HepG2 (cell line): ENCODE measurements at regions of chr14 and their contacts with region 1.

Region 1: GRCh38 chr14:53953002-53953827 is 3.4 kb downstream of the BMP4 start:
- DNase-seq: peak; percentile 69
- ATAC-seq: peak; percentile 71
- H3K4me3 ChIP-seq: peak overlapping the region; percentile 87 to 92 (median 90)
- H3K27ac ChIP-seq: peak overlapping the region; percentile 85
- H3K4me1 ChIP-seq: peaks cover 60% of the 10 kb centered on the region
- H3K27me3 ChIP-seq: no peaks in the 10 kb centered on the region; a peak in 1 of 5 replicates
- CTCF ChIP-seq: no peak
- EP300 ChIP-seq: no peak
- POLR2A ChIP-seq: peak; percentile 82 to 88
- RAD21 ChIP-seq: peak; percentile 57

Region 2: DNA sequence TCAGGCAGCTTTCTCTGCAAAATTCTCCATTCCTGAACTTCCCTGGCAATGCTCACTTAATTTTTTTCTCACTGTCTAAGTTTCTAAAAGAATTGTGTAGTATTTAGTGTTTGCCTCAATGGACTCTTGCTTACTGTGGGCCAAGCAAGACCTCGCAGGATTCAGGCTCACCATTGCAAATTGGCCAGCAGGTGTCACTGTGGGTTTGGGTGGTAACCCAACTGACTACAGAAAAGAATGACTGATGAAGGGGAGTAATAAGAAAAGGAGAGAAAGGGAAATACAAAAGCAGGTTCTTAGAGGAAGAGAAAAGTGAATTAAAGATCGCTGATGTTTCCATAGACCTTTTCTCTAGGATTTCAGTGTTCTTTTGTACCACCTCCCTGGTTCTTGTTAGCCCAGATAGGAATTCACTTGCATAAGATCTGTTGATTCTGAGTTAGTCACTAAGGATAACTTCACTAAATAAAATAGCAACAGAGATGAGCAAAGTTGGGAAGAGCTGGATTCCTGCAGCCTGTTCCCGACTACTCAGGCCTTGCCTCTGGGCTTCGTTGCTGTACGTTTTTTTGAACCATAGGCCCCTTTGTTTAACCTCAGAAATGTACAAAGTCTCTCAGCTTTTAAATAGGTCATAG is 413.6 kb before region 1 on chr14:
- CTCF ChIA-PET with region 1: no interaction called
- POLR2A ChIA-PET with region 1: interaction called, 6 read pairs
- in situ Hi-C with region 1: no loop called
- intact Hi-C with region 1: loop called (anchors 5 kb)
- DNase-seq: peak; percentile 73
- ATAC-seq: peak; percentile 90
- H3K4me3 ChIP-seq: no peak overlapping the region
- H3K27ac ChIP-seq: no peak overlapping the region
- H3K4me1 ChIP-seq: peaks cover 15% of the 10 kb centered on the region
- H3K27me3 ChIP-seq: no peaks in the 10 kb centered on the region
- CTCF ChIP-seq: peak; percentile 91
- EP300 ChIP-seq: no peak
- POLR2A ChIP-seq: no peak
- RAD21 ChIP-seq: peak; percentile 88

Region 3: GRCh38 chr14:53979747-53980642 is 26.8 kb after region 1 on chr14:
- CTCF ChIA-PET with region 1: no interaction called
- POLR2A ChIA-PET with region 1: interaction called, 163 read pairs
- in situ Hi-C with region 1: no loop called
- intact Hi-C with region 1: no loop called
- DNase-seq: peak; percentile 97
- ATAC-seq: peak; percentile 86
- H3K4me3 ChIP-seq: peak overlapping the region in 2 of 3 experiments; percentile 1 to 18; a peak in 2 of 6 replicates
- H3K27ac ChIP-seq: peak overlapping the region; percentile 99
- H3K4me1 ChIP-seq: peaks cover 75% of the 10 kb centered on the region
- H3K27me3 ChIP-seq: no peaks in the 10 kb centered on the region
- CTCF ChIP-seq: no peak
- EP300 ChIP-seq: peak; percentile 83 to 96; a peak in 3 of 4 replicates
- POLR2A ChIP-seq: no peak
- RAD21 ChIP-seq: no peak

Region 4: DNA sequence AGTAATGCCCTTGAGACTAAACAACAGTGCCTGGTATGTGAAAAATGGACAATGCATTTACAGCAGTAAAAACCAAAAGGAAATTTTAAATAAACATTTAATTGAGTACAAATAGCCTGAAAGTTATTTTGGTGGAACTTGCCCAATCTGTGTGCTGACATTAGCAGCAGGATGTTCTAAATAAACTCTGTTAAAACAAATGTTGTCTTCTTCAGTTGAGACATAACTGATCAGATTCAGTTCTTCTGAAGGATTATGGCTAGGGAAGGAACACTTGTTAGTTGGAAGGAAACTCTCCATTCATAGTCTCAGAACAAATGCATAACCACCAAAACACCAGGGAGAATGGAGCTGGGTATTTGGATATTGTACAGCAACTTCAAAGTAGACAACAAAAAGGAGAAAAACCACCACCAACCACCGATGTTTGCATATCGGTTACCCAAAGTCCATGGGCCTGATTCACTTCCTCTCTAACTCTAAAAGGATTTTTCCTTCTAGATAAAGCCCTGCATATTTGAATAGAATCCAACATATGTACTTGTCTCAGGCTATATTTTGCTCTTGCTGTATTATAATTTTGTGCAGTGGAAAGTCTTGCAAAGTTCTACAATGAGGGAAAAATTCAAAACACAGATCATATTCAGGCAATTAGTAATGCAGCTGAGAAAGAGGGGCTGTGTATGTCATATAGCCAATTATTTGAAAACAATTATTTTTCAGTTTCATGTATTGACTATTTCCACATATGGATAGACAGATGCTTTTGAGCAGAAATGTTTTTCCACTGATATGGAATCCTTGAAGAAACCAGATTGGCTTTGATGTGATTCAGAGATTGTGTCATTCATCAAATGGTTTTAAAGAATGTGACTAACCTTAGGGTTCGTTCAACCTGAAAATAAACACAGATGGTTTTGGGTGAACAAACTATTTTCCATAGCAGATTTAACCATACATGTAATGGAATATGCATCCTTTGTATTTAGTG is 155.6 kb after region 1 on chr14:
- CTCF ChIA-PET with region 1: no interaction called
- POLR2A ChIA-PET with region 1: interaction called, 41 read pairs
- in situ Hi-C with region 1: no loop called
- intact Hi-C with region 1: loop called (anchors 1 kb)
- DNase-seq: peak; percentile 96
- ATAC-seq: peak; percentile 94
- H3K4me3 ChIP-seq: no peak overlapping the region; a peak in 1 of 6 replicates
- H3K27ac ChIP-seq: peak overlapping the region; percentile 83
- H3K4me1 ChIP-seq: peaks cover 84% of the 10 kb centered on the region
- H3K27me3 ChIP-seq: no peaks in the 10 kb centered on the region
- CTCF ChIP-seq: no peak
- EP300 ChIP-seq: peak in 1 of 2 experiments; percentile 97; a peak in 3 of 4 replicates
- POLR2A ChIP-seq: no peak
- RAD21 ChIP-seq: 0 out of 2 replicates have a peak, but pooled peaks have one; percentile 27

Region 5: GRCh38 chr14:54175298-54175942 is 222.2 kb after region 1 on chr14:
- CTCF ChIA-PET with region 1: interaction called, 8 read pairs
- POLR2A ChIA-PET with region 1: interaction called, 66 read pairs
- in situ Hi-C with region 1: loop called (anchors 5 kb)
- intact Hi-C with region 1: loop called (anchors 1 kb)
- DNase-seq: peak; percentile 89
- ATAC-seq: peak; percentile 78
- H3K4me3 ChIP-seq: no peak overlapping the region; a peak in 1 of 6 replicates
- H3K27ac ChIP-seq: peak overlapping the region; percentile 61
- H3K4me1 ChIP-seq: peaks cover 64% of the 10 kb centered on the region
- H3K27me3 ChIP-seq: no peaks in the 10 kb centered on the region
- CTCF ChIP-seq: peak; percentile 85
- EP300 ChIP-seq: peak in 1 of 2 experiments; percentile 59; a peak in 2 of 4 replicates
- POLR2A ChIP-seq: no peak
- RAD21 ChIP-seq: peak; percentile 85

Region 6: DNA sequence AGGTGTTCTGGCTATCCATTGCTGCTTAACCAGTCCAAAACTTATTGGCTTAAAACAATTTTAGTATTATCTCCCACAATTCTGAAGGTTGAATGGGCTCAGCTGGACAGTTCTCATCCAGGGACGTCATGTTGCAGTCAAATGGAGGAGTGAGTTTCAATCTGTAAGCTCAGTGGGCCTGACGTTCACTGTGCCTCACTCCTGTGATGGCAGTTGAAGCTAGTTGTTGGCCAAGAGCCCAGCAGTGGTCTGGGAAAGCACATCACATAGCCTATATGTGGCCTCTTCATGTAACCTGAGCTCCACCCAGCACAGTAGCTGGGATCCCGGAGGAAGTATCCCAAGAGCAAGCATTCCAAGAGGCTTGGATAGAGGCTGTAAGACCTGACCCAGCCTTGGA is 403.0 kb after region 1 on chr14:
- CTCF ChIA-PET with region 1: no interaction called
- POLR2A ChIA-PET with region 1: interaction called, 11 read pairs
- in situ Hi-C with region 1: no loop called
- intact Hi-C with region 1: loop called (anchors 5 kb)
- DNase-seq: peak; percentile 58
- ATAC-seq: no peak
- H3K4me3 ChIP-seq: no peak overlapping the region
- H3K27ac ChIP-seq: peak overlapping the region; percentile 46
- H3K4me1 ChIP-seq: peaks cover 80% of the 10 kb centered on the region
- H3K27me3 ChIP-seq: no peaks in the 10 kb centered on the region
- CTCF ChIP-seq: no peak
- EP300 ChIP-seq: no peak
- POLR2A ChIP-seq: no peak
- RAD21 ChIP-seq: no peak